ENCODE measurements at regions of chr9 and their contacts with region 1.

Region 1: DNA sequence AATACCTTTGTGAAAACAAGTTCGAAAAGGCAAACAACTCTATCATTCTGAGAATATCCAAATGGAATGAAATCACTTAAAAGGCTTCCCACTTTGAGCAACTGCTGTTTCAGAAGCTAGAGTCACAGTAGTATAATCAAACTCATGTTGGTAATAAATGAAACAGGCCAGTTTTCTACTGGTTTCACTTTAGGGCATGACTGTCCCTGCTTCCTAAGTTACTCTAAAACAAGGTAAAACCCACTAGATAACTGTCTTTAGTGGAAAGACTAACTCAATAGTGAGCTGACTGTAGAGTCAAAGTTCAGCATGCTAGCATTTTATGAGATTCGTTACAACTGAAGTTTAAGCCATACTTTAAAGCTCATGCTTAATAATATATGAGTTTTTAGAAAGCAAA is 6.0 kb downstream of the CDC26 start:
- DNase-seq: no peak
- H3K4me3 ChIP-seq: no peak overlapping the region
- H3K27ac ChIP-seq: no peak overlapping the region
- H3K4me1 ChIP-seq: peaks cover 5% of the 10 kb centered on the region
- H3K27me3 ChIP-seq: no peaks in the 10 kb centered on the region
- CTCF ChIP-seq: no peak

Region 2: GRCh38 chr9:112582371-112583262 is 686.7 kb before region 1 on chr9:
- CTCF ChIA-PET with region 1: no interaction called
- POLR2A ChIA-PET with region 1: interaction called, 12 read pairs
- intact Hi-C with region 1: no loop called
- DNase-seq: peak; percentile 19
- H3K4me3 ChIP-seq: no peak overlapping the region
- H3K27ac ChIP-seq: no peak overlapping the region
- H3K4me1 ChIP-seq: peaks cover 19% of the 10 kb centered on the region
- H3K27me3 ChIP-seq: no peaks in the 10 kb centered on the region
- CTCF ChIP-seq: no peak

Region 3: DNA sequence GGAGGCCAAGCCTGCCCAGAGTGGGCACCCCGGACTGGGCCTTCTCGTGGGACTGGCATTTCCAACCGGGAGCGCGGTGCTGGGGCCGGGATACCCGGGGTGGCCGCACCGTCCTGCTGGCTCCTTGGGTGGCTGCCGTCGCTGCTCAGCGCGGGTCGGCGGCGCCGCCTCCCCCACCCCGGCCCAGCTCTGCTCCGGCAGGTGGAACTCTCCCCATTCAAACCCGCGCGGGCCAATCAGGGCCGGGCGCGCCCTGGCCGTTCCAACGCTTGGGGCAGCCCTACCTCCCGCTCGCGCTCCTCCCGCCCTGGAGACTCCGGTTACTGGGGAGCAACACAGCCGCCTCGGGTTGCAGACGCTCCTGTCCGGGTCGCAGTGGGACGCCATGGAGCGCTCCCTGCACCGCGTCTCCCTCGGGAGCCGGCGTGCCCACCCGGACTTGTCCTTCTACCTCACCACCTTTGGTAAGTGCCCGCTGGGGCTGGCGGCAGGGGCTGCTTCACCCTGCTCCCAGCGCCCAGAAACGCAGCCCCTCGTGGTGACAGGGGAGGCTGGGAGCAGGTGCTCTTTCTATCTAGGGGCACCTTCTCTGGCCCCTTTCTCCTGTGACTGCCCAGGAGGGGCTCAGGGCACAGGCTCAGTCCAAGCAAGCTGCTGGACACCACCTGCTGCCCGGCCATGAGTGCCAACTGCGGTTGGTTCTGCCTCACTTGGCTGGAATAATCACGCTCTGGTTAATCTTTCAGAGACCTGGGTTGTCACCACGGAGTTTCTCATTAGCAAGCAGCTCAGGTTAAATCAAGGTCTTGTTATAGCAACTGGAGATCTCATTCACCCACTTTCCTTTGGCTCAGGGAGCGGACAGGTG is 194.3 kb after region 1 on chr9 and contains the start of gene RGS3:
- CTCF ChIA-PET with region 1: no interaction called
- POLR2A ChIA-PET with region 1: no interaction called
- intact Hi-C with region 1: no loop called
- DNase-seq: peak; percentile 60
- H3K4me3 ChIP-seq: peak within 1 kb of the TSS; percentile 58
- H3K27ac ChIP-seq: peak within 1 kb of the TSS; percentile 54
- H3K4me1 ChIP-seq: no peaks in the 10 kb centered on the region
- H3K27me3 ChIP-seq: no peaks in the 10 kb centered on the region
- CTCF ChIP-seq: no peak
- total RNA-seq, gene RGS3: 19.2 and 19.8 TPM in 2 replicates

Measured in A673 (cell line).